ENCODE measurements at regions of chr10 and their contacts with region 1.

Region 1: GRCh38 chr10:89426230-89426868 is 12.0 kb downstream of the IFIT5 start:
- DNase-seq: no peak
- H3K4me3 ChIP-seq: no peak overlapping the region
- H3K27ac ChIP-seq: no peak overlapping the region
- H3K4me1 ChIP-seq: peaks cover 18% of the 10 kb centered on the region
- H3K27me3 ChIP-seq: no peaks in the 10 kb centered on the region
- CTCF ChIP-seq: peak; percentile 91

Region 2: DNA sequence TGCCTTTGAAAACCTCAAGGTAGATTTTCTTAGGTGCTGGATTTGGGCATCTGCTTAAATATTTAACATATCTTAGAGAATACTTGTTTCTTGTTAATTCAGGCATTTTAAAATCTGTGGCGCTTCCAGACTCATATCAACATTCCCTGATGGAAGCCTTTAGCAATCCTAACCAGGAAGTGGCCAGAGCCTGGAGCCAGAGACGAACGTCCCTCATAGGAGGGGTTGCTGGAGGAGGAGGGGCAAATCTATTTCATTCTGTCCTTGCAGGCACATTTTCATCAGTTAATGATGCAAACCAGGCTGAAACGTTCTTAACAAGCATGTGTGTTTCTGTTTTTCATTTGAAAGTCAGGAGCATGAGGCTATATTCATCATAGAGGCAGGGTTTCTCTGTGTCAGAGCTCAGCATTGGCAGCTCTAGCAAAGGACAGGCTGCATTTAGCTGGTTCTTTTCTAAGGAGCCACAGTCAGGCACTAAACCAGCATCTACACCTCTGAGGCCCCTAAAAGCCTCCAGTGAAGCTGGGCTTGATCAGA is 142.3 kb before region 1 on chr10:
- intact Hi-C with region 1: no loop called
- DNase-seq: peak; percentile 59
- H3K4me3 ChIP-seq: peak overlapping the region; percentile 45
- H3K27ac ChIP-seq: peak overlapping the region; percentile 82
- H3K4me1 ChIP-seq: peaks cover 35% of the 10 kb centered on the region
- H3K27me3 ChIP-seq: no peaks in the 10 kb centered on the region
- CTCF ChIP-seq: no peak

Region 3: DNA sequence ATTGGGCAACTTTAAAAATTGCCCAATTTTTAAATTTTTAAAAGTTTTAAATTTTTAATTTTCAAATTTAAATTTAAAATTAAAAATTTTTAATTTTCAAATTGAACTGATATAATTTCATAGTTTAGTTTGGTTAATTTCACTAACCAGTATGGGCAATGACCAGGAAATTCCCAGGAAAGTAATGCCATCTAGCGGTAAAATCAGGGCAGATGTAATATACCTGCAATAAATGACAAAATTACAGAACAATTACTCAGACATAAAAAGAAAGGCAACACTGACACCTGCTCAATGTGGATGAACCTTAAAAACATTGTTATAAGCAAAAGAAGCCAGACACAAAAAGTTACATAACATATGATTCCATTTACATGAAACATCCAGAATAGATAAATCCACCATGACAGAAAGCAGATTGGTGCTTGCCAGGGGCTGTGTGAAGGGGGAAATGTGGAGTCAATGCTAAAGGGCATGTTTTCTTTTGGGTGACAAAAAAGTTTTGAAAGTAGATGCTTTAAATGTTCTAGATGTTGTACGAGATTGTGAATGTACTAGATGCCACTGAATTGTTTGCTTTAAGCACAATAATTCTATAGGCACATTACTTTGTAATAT is 137.6 kb after region 1 on chr10:
- intact Hi-C with region 1: loop called (anchors 2 kb)
- DNase-seq: no peak
- H3K4me3 ChIP-seq: no peak overlapping the region
- H3K27ac ChIP-seq: no peak overlapping the region
- H3K4me1 ChIP-seq: no peaks in the 10 kb centered on the region
- H3K27me3 ChIP-seq: no peaks in the 10 kb centered on the region
- CTCF ChIP-seq: peak; percentile 81

Region 4: DNA sequence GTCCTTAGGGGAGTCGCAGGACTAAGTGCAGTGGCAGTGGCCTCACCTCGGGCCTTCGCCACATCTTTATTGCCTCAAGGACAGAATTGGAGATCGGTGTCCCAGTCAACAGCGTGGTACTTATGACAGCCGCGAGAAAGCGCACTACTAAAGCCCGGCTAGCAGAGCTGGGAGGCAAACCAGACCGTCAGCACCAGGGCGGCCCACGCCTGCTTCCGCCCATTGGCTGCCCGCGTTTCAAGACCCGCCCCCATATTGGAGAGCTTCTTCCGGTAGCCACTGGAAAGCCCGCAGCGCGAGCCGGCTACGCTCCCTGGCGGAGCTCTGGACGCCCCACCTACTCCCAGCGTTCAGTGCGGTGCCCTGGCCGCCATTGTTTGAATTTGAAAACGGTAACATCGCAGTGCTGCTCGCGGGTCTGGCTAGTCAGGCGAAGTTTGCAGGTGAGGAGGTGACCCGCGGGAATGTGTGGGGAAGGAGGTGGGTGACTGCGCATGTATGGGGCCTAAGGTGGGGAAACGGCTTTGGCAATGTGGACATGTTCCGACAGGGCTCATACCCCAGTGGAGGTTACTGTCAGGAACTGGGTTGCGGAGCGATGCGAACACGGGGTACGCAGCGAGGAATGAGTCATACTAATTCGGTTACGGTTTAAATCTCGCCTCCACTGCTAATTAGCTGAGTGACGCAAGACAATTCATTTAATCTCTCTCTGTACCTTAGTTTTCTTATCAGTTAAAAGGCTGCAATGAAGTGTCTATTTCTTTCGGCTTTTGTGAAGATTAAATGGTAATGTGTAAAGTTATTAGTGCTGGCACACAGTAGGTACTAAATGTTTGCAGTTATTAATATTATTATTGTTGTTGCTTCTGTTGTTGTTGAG is 275.1 kb after region 1 on chr10 and contains the start of gene KIF20B:
- intact Hi-C with region 1: loop called (anchors 10 kb)
- DNase-seq: peak; percentile 95
- H3K4me3 ChIP-seq: peak within 1 kb of the TSS; percentile 76
- H3K27ac ChIP-seq: peak within 1 kb of the TSS; percentile 94
- H3K4me1 ChIP-seq: peaks cover 28% of the 10 kb centered on the region
- H3K27me3 ChIP-seq: no peaks in the 10 kb centered on the region
- CTCF ChIP-seq: peak; percentile 64
- total RNA-seq, gene KIF20B: 2.4 TPM